PC-3 (cell line): ENCODE measurements at regions of chr10 and their contacts with region 1.

Region 1: DNA sequence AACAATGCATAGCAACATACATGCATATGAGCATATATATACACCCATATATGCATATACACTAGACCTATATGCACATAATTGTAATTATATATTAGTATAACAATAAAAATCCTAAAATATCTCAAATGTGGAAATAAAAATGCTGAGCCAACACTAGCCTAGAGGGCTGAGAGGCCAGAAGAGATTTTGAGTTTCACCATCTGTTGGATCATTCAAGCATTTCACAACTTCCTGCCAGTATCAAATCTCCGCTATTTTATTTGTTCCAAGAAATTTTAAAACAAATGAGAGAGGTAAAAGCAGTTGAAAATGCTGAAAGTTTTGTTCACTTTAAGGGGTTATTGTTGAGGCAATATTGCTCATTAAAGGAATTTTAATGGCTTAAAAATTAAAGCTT is 187.0 kb downstream of the PCDH15 start:
- DNase-seq: no peak
- ATAC-seq: no peak
- H3K4me3 ChIP-seq: no peak overlapping the region
- H3K27ac ChIP-seq: no peak overlapping the region
- H3K4me1 ChIP-seq: peaks cover 10% of the 10 kb centered on the region
- H3K27me3 ChIP-seq: no peaks in the 10 kb centered on the region
- CTCF ChIP-seq: no peak

Region 2: GRCh38 chr10:54585572-54585971 is 28.5 kb before region 1 on chr10:
- CTCF ChIA-PET with region 1: no interaction called
- POLR2A ChIA-PET with region 1: no interaction called
- intact Hi-C with region 1: loop called (anchors 1 kb)
- DNase-seq: no peak
- ATAC-seq: no peak
- H3K4me3 ChIP-seq: no peak overlapping the region
- H3K27ac ChIP-seq: no peak overlapping the region
- H3K4me1 ChIP-seq: peaks cover 23% of the 10 kb centered on the region
- H3K27me3 ChIP-seq: no peaks in the 10 kb centered on the region
- CTCF ChIP-seq: no peak

Region 3: GRCh38 chr10:54710918-54711317 is 96.8 kb after region 1 on chr10:
- CTCF ChIA-PET with region 1: no interaction called
- POLR2A ChIA-PET with region 1: no interaction called
- intact Hi-C with region 1: no loop called
- DNase-seq: no peak
- ATAC-seq: no peak
- H3K4me3 ChIP-seq: no peak overlapping the region
- H3K27ac ChIP-seq: no peak overlapping the region
- H3K4me1 ChIP-seq: no peaks in the 10 kb centered on the region
- H3K27me3 ChIP-seq: no peaks in the 10 kb centered on the region
- CTCF ChIP-seq: no peak

Region 4: GRCh38 chr10:54843085-54843646 is 229.1 kb after region 1 on chr10:
- CTCF ChIA-PET with region 1: no interaction called
- POLR2A ChIA-PET with region 1: no interaction called
- intact Hi-C with region 1: no loop called
- DNase-seq: no peak
- ATAC-seq: no peak
- H3K4me3 ChIP-seq: no peak overlapping the region
- H3K27ac ChIP-seq: no peak overlapping the region
- H3K4me1 ChIP-seq: no peaks in the 10 kb centered on the region
- H3K27me3 ChIP-seq: no peaks in the 10 kb centered on the region
- CTCF ChIP-seq: no peak